Esophagus muscularis mucosa (tissue), 4 donors: ENCODE measurements at regions of chrX and their contacts with region 1.

Region 1: GRCh38 chrX:150772150-150772970 is 79.2 kb downstream of the MTMR1 start:
- DNase-seq: no peak
- H3K4me3 ChIP-seq: no peak overlapping the region
- H3K27ac ChIP-seq: no peak overlapping the region
- H3K4me1 ChIP-seq: peaks cover 4 to 10% (median 7%) of the 10 kb centered on the region in 4 donors
- H3K27me3 ChIP-seq: no peaks in the 10 kb centered on the region
- CTCF ChIP-seq: peak; percentile 69 to 82 (median 71)
- EP300 ChIP-seq: no peak
- POLR2A ChIP-seq: no peak

Region 2: GRCh38 chrX:150856116-150856515 is 83.8 kb after region 1 on chrX:
- intact Hi-C with region 1: no loop called
- DNase-seq: no peak
- H3K4me3 ChIP-seq: no peak overlapping the region
- H3K27ac ChIP-seq: no peak overlapping the region
- H3K4me1 ChIP-seq: no peaks in the 10 kb centered on the region
- H3K27me3 ChIP-seq: no peaks in the 10 kb centered on the region
- CTCF ChIP-seq: no peak
- EP300 ChIP-seq: no peak
- POLR2A ChIP-seq: no peak

Region 3: DNA sequence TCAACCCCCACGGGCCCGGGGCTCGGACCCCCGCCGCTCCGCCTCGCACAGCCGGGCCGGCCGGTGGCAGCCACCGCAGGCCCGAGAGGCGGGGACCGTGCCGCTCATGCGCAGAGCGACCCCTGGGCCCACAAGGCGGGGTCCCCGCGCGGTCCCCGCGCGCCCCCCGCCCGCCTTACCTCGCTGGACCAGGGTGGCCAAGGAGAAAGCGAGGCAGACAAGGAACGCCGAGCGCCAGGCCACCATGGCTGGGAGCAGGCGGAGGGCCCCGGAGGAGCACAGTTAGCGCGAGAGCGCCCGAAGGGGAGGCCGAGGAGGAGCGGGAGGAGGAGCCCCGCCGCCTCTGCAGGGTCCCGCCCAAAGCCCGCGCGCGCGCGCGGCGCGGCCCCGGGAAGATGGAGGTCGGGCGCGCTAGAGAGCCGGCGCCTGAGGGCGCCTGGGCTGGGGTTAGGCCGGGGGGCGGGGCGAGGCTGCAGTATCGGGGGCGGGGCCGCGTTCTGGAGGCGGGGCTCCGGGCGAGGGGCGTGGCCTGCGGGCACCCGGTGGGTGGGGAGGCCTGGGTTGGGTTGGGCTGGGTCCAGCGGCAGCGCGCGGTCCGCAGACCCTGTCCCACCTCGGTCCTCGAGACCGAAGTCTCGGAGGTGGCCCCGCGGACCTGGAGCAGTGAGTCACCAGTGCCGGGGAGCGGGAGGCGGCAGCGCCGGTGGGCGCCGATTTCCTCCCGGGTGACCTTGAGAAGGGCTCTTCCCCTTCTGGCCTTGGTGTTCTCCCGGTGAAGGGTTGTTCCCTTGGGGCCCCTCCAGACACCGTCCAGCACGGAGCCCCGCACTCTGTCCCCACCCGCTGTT is 126.2 kb after region 1 on chrX and contains the start of gene CD99L2:
- intact Hi-C with region 1: loop called (anchors 10 kb)
- DNase-seq: peak; percentile 92
- H3K4me3 ChIP-seq: peak within 1 kb of the TSS; percentile 60 to 78 (median 72)
- H3K27ac ChIP-seq: peak within 1 kb of the TSS; percentile 79 to 84 (median 82)
- H3K4me1 ChIP-seq: peaks cover 0 to 7% (median 7%) of the 10 kb centered on the region in 4 donors
- H3K27me3 ChIP-seq: no peaks in the 10 kb centered on the region
- CTCF ChIP-seq: no peak
- EP300 ChIP-seq: no peak
- POLR2A ChIP-seq: no peak
- total RNA-seq, gene CD99L2: 61.0 to 91.5 (median 70.1) TPM

Region 4: GRCh38 chrX:151004082-151004481 is 231.7 kb after region 1 on chrX:
- intact Hi-C with region 1: loop called (anchors 5 kb)
- DNase-seq: no peak
- H3K4me3 ChIP-seq: no peak overlapping the region
- H3K27ac ChIP-seq: no peak overlapping the region
- H3K4me1 ChIP-seq: no peaks in the 10 kb centered on the region
- H3K27me3 ChIP-seq: no peaks in the 10 kb centered on the region
- CTCF ChIP-seq: no peak
- EP300 ChIP-seq: no peak
- POLR2A ChIP-seq: no peak

Region 5: DNA sequence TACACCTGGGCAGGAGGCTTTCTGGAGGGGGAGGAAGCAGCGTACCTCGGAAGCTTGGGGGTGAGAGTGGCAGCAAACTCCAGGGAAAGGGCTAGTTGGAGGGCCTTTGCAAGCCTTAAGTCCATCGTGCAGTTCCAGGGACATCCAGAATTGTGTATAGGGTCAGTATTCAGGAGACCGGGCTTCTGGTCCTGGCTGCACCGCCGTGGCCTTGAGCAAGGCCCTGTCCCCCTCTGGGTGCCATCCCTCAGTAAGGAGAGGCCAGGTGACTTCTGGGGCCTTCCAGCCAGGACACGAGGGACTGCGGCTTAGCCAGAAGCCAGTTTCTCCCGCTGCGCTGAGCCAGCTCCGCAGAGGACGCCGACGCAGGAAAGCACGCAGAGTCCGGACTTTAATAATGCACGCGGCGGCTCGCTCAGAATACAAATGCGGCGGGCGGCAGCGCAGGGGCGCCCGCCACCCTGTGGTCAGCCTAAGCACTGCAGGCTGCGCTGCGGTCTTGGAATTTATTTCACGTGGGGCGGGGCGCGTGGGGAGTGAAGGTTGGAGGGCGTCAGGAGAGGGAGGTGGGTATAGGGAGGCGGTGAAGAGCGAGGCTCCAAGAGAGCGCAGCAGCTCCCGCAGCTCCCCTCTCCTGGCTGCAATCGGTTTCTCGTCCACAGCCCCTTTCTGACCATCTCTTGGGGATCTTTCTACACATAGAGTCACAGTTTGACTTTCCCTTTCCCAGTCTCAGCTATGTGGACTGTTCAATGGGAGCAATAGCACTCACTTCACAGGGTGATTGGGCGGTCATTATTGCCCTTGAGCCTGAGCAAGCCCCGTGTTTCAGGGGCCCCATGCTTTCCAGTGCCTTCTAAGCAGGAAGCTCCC is 310.0 kb after region 1 on chrX:
- intact Hi-C with region 1: loop called (anchors 1 kb)
- DNase-seq: no peak
- H3K4me3 ChIP-seq: peak overlapping the region in 3 of 4 donors; percentile 18 to 35 (median 18)
- H3K27ac ChIP-seq: no peak overlapping the region
- H3K4me1 ChIP-seq: peaks cover 0 to 11% (median 5%) of the 10 kb centered on the region in 4 donors
- H3K27me3 ChIP-seq: no peaks in the 10 kb centered on the region
- CTCF ChIP-seq: peak; percentile 89 to 96 (median 91)
- EP300 ChIP-seq: no peak
- POLR2A ChIP-seq: no peak